Activated CD4-positive, alpha-beta memory T cell treated with anti-CD3 and anti-CD28 coated beads for 36 hours (primary cell): ENCODE measurements at regions of chr7 and their contacts with region 1.

Region 1: DNA sequence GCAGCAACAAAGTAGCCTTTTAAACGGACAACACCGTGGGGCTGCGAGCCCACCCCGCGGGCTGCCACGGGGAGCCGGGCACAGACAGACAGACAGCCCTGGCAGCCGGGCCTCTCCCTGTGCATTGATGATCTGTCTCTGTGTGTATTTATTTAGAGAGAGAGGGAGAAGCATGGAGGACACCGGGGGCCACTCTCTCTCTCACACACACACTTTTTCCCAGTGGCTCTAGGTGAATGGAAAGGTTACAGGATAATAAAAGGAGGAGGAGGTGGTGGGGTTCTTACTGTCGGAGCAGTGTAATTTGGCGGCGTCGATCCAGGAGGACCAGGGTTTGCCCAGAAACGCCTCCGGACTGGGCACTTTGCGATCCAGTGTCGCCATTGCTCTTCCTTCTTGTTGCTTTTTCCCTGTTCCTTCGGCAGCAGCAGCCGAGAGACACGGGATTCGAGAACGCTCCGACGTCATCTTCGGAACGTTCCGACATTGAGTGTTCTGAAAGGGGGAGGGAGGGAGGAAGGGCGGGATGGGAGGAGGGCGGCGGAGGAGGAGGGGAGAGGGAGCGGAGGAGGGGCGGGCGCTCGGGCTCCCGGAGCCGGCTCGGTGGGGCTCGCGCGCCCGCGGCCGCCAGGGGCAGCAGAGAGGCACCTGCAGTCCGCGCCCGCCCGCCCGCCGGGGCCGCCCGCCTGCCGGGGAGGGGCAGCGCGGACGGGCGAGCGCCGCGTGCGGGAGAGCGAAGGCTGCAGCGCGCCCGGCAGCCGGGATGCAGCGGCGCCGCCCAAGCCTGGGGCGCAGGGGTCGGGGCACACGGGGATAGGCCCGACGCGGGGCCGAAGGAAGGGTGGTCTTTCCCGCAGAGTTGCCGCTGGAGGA is at the start of gene ATXN7L1:
- DNase-seq: peak; percentile 93
- H3K4me3 Mint-ChIP-seq: peak within 1 kb of the TSS; percentile 88
- H3K27ac Mint-ChIP-seq: peak within 1 kb of the TSS; percentile 79
- H3K4me1 Mint-ChIP-seq: peaks cover 48% of the 10 kb centered on the region
- H3K27me3 Mint-ChIP-seq: no peaks in the 10 kb centered on the region
- total RNA-seq, gene ATXN7L1: 12.4 to 13.3 TPM

Region 2: GRCh38 chr7:105678811-105679495 is 197.4 kb before region 1 on chr7:
- CTCF ChIA-PET with region 1: interaction called, 3 read pairs
- POLR2A ChIA-PET with region 1: no interaction called
- intact Hi-C with region 1: loop called (anchors 5 kb)
- DNase-seq: peak; percentile 54
- H3K4me3 Mint-ChIP-seq: peak overlapping the region; percentile 78
- H3K27ac Mint-ChIP-seq: peak overlapping the region; percentile 95
- H3K4me1 Mint-ChIP-seq: peaks cover 75% of the 10 kb centered on the region
- H3K27me3 Mint-ChIP-seq: no peaks in the 10 kb centered on the region

Region 3: GRCh38 chr7:105849122-105849855 is 27.0 kb before region 1 on chr7:
- CTCF ChIA-PET with region 1: interaction called, 4 read pairs
- POLR2A ChIA-PET with region 1: no interaction called
- intact Hi-C with region 1: loop called (anchors 1 kb)
- DNase-seq: peak; percentile 87
- H3K4me3 Mint-ChIP-seq: peak overlapping the region; percentile 11
- H3K27ac Mint-ChIP-seq: peak overlapping the region; percentile 68
- H3K4me1 Mint-ChIP-seq: peaks cover 46% of the 10 kb centered on the region
- H3K27me3 Mint-ChIP-seq: no peaks in the 10 kb centered on the region

Region 4: GRCh38 chr7:105890290-105890997 is 14.1 kb after region 1 on chr7:
- CTCF ChIA-PET with region 1: interaction called, 9 read pairs
- POLR2A ChIA-PET with region 1: no interaction called
- intact Hi-C with region 1: loop called (anchors 1 kb)
- DNase-seq: peak; percentile 29
- H3K4me3 Mint-ChIP-seq: no peak overlapping the region
- H3K27ac Mint-ChIP-seq: no peak overlapping the region
- H3K4me1 Mint-ChIP-seq: peaks cover 12% of the 10 kb centered on the region
- H3K27me3 Mint-ChIP-seq: no peaks in the 10 kb centered on the region

Region 5: GRCh38 chr7:105924945-105925344 is 48.6 kb after region 1 on chr7:
- CTCF ChIA-PET with region 1: interaction called, 7 read pairs
- POLR2A ChIA-PET with region 1: no interaction called
- intact Hi-C with region 1: loop called (anchors 2 kb)
- DNase-seq: peak; percentile 50
- H3K4me3 Mint-ChIP-seq: no peak overlapping the region
- H3K27ac Mint-ChIP-seq: peak overlapping the region; percentile 53
- H3K4me1 Mint-ChIP-seq: peaks cover 30% of the 10 kb centered on the region
- H3K27me3 Mint-ChIP-seq: peaks cover 2% of the 10 kb centered on the region

Region 6: GRCh38 chr7:106009403-106010226 is 133.3 kb after region 1 on chr7:
- CTCF ChIA-PET with region 1: no interaction called
- POLR2A ChIA-PET with region 1: no interaction called
- intact Hi-C with region 1: loop called (anchors 2 kb)
- DNase-seq: peak; percentile 91
- H3K4me3 Mint-ChIP-seq: no peak overlapping the region
- H3K27ac Mint-ChIP-seq: no peak overlapping the region
- H3K4me1 Mint-ChIP-seq: peaks cover 24% of the 10 kb centered on the region
- H3K27me3 Mint-ChIP-seq: peaks cover 2% of the 10 kb centered on the region